Tibial artery (tissue), 4 donors: ENCODE measurements at regions of chr5 and their contacts with region 1.

Region 1: DNA sequence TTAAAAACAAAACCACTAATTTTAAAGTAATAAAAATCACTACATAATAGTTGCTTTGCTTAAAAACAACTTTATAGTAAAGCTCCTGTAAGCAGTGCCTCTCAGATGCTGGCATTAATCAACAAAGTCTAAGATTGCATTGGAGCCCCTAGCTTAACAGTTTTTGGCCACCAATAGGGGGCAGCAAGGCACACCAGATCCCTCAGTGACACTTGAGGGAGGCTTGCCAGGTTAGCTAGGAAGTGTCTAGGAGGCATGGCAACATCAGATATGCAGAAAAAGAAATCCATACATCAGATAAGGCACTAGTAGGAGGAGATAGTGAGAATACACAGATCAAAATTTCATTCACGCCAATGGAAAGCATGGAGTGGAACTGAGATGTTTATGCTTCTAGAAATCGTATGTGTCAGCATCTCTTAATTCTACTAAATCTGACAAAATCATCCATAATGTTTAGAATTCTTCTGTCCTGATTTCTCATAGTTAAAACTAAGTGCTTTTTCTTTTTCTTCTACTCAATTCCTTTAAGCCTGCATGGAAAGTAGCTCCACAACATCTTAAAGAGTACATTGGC is 73.6 kb upstream of the PAM start:
- DNase-seq: peak; percentile 72 to 73
- H3K4me3 ChIP-seq: no peak overlapping the region
- H3K27ac ChIP-seq: no peak overlapping the region
- H3K4me1 ChIP-seq: peaks cover 0 to 4% (median 0%) of the 10 kb centered on the region in 4 donors
- H3K27me3 ChIP-seq: no peaks in the 10 kb centered on the region
- CTCF ChIP-seq: peak; percentile 76 to 85

Region 2: GRCh38 chr5:102388235-102388634 is 293.3 kb before region 1 on chr5:
- intact Hi-C with region 1: no loop called
- DNase-seq: no peak
- H3K4me3 ChIP-seq: no peak overlapping the region
- H3K27ac ChIP-seq: no peak overlapping the region
- H3K4me1 ChIP-seq: no peaks in the 10 kb centered on the region
- H3K27me3 ChIP-seq: no peaks in the 10 kb centered on the region
- CTCF ChIP-seq: no peak

Region 3: DNA sequence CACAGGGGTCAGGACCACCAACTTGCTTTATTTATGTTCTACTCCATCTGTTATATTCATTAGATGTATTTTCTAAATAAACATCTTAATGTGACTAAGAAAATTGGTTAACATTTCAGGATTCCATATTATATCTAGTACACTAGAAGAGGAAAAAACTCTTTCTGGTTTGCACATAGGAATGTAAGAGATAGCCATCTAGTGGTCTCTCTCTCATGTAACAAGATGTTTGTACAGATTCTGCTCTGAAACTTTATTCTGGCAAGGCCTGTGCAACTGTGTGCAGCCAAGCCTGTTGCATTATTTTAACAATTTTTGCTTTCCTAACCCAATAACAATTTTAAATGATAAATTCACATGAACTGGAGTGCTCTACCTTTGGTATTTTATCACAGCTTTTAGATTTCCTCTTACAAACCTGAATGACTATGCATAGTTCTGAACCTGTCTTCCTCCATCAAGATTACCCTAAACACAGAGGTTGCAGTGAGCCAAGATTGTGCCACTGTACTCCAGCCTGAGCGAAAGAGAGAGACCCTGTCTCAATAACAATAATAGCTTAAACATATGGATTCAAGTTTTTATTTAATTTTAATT is 290.3 kb after region 1 on chr5:
- intact Hi-C with region 1: loop called (anchors 10 kb)
- DNase-seq: no peak
- H3K4me3 ChIP-seq: no peak overlapping the region
- H3K27ac ChIP-seq: no peak overlapping the region
- H3K4me1 ChIP-seq: peaks cover 0 to 22% (median 13%) of the 10 kb centered on the region in 4 donors
- H3K27me3 ChIP-seq: no peaks in the 10 kb centered on the region
- CTCF ChIP-seq: peak; percentile 66 to 67